Prostate gland (tissue), 2 donors: ENCODE measurements at regions of chr10 and their contacts with region 1.

Region 1: DNA sequence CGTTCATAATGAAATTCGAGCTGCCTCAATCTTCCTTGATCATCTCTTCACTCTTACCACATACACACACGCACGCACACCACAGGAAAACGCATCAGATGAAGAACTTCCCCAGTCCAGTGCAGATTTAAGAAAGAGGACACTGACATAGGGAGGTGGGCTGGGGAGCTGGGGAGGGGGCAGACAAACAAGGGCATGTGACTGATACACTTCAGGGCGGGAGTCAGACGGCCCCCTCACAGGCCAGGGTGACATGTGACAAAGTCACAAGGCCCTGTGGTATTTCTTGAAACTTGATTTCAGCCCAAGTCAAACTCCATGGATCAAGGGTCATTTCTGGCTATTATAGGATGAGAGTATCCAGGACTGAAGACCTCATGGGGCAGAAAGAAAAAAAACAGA is 82.6 kb downstream of the KCNMA1 start:
- DNase-seq: no peak
- H3K4me3 ChIP-seq: no peak overlapping the region
- H3K27ac ChIP-seq: peak overlapping the region; percentile 39 to 62
- H3K4me1 ChIP-seq: peaks cover 4% of the 10 kb centered on the region
- H3K27me3 ChIP-seq: peaks cover 2% of the 10 kb centered on the region
- CTCF ChIP-seq: no peak
- POLR2A ChIP-seq: no peak

Region 2: DNA sequence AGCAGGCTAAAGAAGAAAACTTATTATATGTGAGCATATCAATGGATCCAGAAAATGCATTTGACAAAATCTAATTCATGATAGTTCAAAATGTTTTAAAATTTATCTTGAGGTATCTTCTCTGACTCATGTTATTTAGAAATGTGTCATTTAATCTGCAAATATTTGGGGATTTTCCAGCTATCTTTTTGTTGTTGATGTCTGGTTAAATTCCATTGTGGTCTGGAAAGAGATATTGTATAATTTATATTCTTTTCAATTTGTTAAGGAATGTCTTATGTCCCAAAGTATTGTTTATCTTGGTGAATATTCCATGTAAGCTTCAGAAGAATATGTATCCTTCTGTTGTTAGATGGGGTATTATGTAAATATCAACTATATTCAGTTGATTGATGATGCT is 859.9 kb before region 1 on chr10:
- intact Hi-C with region 1: no loop called
- DNase-seq: no peak
- H3K4me3 ChIP-seq: no peak overlapping the region
- H3K27ac ChIP-seq: no peak overlapping the region
- H3K4me1 ChIP-seq: no peaks in the 10 kb centered on the region
- H3K27me3 ChIP-seq: no peaks in the 10 kb centered on the region
- CTCF ChIP-seq: no peak
- POLR2A ChIP-seq: no peak

Region 3: DNA sequence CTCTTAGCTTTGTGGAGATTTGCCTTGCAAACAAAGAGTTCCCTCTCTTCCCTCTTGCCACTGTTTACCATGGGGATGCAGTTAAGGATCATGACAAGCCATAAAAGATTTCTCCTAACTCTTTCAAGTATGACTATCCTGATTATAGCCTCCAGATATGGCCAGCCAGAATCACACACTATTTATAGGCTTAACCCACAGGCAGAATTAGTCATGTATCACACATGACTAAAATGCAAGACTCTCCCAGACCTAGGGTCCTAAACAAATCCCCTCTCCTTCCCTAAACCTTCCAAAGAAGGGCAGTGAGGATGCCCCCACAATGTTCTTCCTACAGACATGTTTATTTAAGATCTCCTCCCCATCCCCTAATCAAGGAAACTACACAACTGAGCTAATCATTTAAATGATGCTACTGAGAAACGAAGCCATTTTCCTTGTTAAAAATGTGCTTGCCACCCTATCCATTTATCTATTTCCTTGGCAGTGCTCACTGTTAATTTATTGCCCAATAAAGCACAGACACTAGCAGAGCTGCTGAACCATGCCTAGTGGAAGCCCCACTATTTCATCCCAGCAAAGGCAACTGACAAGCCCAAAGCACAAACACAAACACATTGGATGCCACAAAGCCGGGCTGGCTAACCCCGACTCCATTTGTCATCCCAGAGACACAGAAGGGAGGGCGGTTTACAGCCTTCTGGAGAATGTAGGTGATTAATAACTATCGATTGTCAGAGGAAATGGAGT is 280.8 kb before region 1 on chr10:
- intact Hi-C with region 1: no loop called
- DNase-seq: no peak
- H3K4me3 ChIP-seq: no peak overlapping the region
- H3K27ac ChIP-seq: no peak overlapping the region
- H3K4me1 ChIP-seq: no peaks in the 10 kb centered on the region
- H3K27me3 ChIP-seq: no peaks in the 10 kb centered on the region
- CTCF ChIP-seq: no peak
- POLR2A ChIP-seq: no peak

Region 4: GRCh38 chr10:77494327-77494726 is 60.7 kb before region 1 on chr10:
- intact Hi-C with region 1: loop called (anchors 5 kb)
- DNase-seq: no peak
- H3K4me3 ChIP-seq: no peak overlapping the region
- H3K27ac ChIP-seq: peak overlapping the region; percentile 44 to 46
- H3K4me1 ChIP-seq: peaks cover 4% of the 10 kb centered on the region
- H3K27me3 ChIP-seq: no peaks in the 10 kb centered on the region
- CTCF ChIP-seq: peak in 3 of 4 experiments; percentile 31 to 50 (median 31)
- POLR2A ChIP-seq: no peak

Region 5: GRCh38 chr10:77603534-77603927 is 48.5 kb after region 1 on chr10:
- intact Hi-C with region 1: no loop called
- DNase-seq: no peak
- H3K4me3 ChIP-seq: no peak overlapping the region
- H3K27ac ChIP-seq: no peak overlapping the region
- H3K4me1 ChIP-seq: no peaks in the 10 kb centered on the region
- H3K27me3 ChIP-seq: no peaks in the 10 kb centered on the region
- CTCF ChIP-seq: no peak
- POLR2A ChIP-seq: no peak

Region 6: DNA sequence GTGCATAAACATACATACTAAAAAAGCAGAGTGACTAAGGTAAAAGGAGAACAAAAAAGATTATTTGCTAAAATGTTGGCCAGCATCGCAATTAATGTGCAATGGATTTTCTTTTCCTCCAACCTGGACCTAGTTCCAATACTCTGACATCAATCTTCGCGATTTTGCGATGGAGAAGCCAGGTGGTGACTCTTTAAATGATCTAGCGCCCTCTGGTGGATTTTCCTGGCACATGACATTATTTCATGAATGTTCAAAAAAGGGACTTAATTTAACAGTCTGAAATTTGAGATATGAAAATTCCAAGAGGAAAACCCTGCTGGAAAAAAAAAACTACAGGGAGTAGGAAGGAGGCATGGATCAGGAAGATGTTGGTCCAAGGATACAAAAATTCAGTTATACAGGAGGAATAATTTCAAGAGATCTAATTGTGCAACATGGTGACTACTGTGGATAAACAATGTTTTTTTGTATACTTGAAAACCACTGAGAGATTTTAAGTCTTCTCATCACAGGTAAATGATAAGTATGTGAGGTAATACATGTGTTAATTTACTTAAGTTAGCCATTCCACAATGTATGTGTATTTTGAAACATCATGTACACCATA is 86.9 kb after region 1 on chr10:
- intact Hi-C with region 1: no loop called
- DNase-seq: peak; percentile 75
- H3K4me3 ChIP-seq: no peak overlapping the region
- H3K27ac ChIP-seq: no peak overlapping the region
- H3K4me1 ChIP-seq: no peaks in the 10 kb centered on the region
- H3K27me3 ChIP-seq: peaks cover 11% of the 10 kb centered on the region
- CTCF ChIP-seq: peak; percentile 90 to 95 (median 94)
- POLR2A ChIP-seq: no peak